HAP-1 (cell line): ENCODE measurements at regions of chr4 and their contacts with region 1.

Region 1: DNA sequence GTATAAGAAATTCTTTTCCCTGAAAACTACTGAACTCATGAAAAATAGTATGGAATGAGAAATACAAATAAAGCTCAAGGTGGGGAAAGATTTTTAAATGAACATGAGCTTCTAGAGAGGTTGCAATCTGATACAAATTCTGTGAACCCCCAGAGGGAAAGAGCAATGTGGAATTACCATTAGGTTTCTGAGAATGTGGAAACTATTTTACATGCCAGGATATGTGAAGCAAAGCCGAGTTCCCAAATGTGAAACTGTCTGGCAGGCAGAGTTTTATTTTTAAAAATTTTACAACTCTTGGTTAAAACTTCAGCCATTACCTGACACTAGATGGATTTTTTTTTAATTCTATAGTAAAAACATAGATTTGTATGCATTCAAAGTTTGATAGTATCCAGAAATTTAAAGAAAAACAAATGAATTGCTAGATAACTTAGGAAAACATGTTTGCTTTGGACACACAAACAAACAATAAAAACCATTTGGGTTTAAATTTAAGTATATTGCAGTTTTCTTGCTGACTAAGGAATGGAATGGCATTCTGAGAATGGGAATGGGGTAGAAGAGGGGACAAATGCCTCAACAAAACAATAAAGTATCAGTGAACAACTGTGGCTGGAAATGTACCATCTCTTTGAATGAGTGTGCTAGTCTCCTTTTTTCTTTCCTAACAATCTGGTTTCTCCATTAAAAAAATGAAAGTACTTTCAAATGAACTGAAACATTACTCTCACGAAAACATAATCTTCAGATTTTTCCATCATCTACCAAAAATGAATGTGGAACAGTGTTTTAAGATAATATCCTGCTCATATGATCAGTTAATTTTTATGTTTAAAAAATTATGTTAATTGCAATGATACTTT is 99.6 kb downstream of the PCDH18 start:
- DNase-seq: no peak
- H3K4me3 ChIP-seq: no peak overlapping the region
- H3K4me1 ChIP-seq: no peaks in the 10 kb centered on the region
- H3K27me3 ChIP-seq: no peaks in the 10 kb centered on the region

Region 2: DNA sequence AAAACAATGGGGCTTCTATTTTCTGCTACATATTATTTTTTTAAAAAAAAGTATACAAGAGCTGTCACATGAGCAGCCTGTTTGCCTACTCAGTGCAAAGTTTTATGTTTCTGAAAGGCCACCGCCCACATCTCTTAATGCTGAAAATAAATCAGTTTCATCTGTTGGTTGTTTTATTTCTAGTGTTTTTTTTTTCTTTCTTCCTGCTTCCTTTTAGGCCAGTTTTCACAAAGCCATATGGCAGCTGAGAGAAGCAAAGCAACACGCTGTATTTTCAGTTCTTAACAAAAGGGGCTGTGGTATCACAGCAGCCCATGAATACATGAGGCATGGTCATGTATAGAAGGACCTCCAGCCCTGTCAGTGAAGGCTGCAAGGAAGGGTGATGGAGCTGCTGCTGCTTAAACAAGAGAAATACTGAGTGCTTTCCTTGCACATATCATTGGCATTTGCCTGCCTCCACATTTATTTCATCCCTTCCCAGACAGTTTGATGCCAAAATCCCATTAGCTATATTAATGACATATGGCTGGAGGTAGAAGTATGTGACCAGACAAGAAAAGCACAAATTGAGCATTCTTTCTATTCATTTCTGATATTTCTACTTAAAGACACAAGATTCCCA is 72.9 kb before region 1 on chr4:
- in situ Hi-C with region 1: no loop called
- DNase-seq: no peak
- H3K4me3 ChIP-seq: no peak overlapping the region
- H3K4me1 ChIP-seq: no peaks in the 10 kb centered on the region
- H3K27me3 ChIP-seq: no peaks in the 10 kb centered on the region

Region 3: GRCh38 chr4:137474711-137475301 is 42.1 kb after region 1 on chr4:
- in situ Hi-C with region 1: loop called (anchors 5 kb)
- DNase-seq: peak; percentile 86 to 100
- H3K4me3 ChIP-seq: no peak overlapping the region
- H3K4me1 ChIP-seq: peaks cover 30% of the 10 kb centered on the region
- H3K27me3 ChIP-seq: no peaks in the 10 kb centered on the region